PC-3 (cell line): ENCODE measurements at regions of chr18 and their contacts with region 1.

Region 1: DNA sequence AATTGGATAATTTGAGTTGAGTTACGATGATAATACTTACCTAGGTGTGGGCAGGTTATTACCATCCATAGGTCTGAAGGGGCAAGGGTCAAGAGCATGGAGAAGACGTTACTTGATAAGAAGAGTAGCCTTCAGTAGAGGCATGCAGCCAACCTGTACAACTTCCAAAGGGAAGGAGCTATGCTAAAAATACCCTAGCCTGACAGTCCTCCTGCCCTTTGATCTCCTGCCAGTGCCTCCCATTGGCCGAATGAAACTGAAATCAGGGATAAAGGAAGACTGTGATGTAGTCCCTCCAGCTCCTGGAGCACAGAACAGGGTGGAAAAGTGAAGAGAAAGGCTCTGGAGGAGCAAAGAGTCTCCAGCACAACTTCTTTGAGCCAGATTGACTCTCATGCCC is 487.4 kb downstream of the ADCYAP1 start:
- DNase-seq: no peak
- ATAC-seq: no peak
- H3K4me3 ChIP-seq: no peak overlapping the region
- H3K27ac ChIP-seq: peak overlapping the region; percentile 97
- H3K4me1 ChIP-seq: peaks cover 58% of the 10 kb centered on the region
- H3K27me3 ChIP-seq: no peaks in the 10 kb centered on the region
- CTCF ChIP-seq: no peak

Region 2: DNA sequence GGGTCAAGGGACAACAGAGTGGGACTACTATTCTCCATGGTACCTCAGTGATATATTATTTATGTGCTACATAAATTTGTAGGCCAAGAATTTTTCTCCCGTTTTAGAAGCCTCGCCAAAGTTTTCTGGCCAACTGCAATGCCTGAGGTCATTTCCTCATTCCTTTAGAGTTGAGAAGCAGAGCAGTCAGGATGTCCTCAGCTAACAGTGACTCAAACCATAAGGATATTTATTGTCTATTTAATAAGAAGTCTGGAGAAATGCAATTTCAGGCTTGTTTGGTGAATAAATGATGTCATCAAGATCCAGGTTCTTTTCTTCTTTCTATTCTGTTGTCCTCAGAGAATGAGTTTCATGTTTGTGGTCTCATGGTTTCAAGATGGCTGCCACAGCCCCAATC is 396.4 kb before region 1 on chr18:
- CTCF ChIA-PET with region 1: no interaction called
- POLR2A ChIA-PET with region 1: no interaction called
- intact Hi-C with region 1: loop called (anchors 2 kb)
- DNase-seq: peak; percentile 79
- ATAC-seq: peak; percentile 97
- H3K4me3 ChIP-seq: no peak overlapping the region
- H3K27ac ChIP-seq: peak overlapping the region; percentile 87
- H3K4me1 ChIP-seq: peaks cover 12% of the 10 kb centered on the region
- H3K27me3 ChIP-seq: no peaks in the 10 kb centered on the region
- CTCF ChIP-seq: no peak

Region 3: GRCh38 chr18:1270080-1270479 is 122.0 kb before region 1 on chr18:
- CTCF ChIA-PET with region 1: no interaction called
- POLR2A ChIA-PET with region 1: no interaction called
- intact Hi-C with region 1: loop called (anchors 1 kb)
- DNase-seq: peak; percentile 96
- ATAC-seq: peak; percentile 99
- H3K4me3 ChIP-seq: no peak overlapping the region
- H3K27ac ChIP-seq: peak overlapping the region; percentile 90
- H3K4me1 ChIP-seq: peaks cover 22% of the 10 kb centered on the region
- H3K27me3 ChIP-seq: no peaks in the 10 kb centered on the region
- CTCF ChIP-seq: no peak

Region 4: GRCh38 chr18:1296237-1296636 is 95.8 kb before region 1 on chr18:
- CTCF ChIA-PET with region 1: interaction called, 6 read pairs
- POLR2A ChIA-PET with region 1: interaction called, 11 read pairs
- intact Hi-C with region 1: loop called (anchors 2 kb)
- DNase-seq: peak; percentile 25
- ATAC-seq: no peak; the same call in 1 of the 2 replicates
- H3K4me3 ChIP-seq: no peak overlapping the region
- H3K27ac ChIP-seq: no peak overlapping the region
- H3K4me1 ChIP-seq: peaks cover 6% of the 10 kb centered on the region
- H3K27me3 ChIP-seq: no peaks in the 10 kb centered on the region
- CTCF ChIP-seq: no peak

Region 5: DNA sequence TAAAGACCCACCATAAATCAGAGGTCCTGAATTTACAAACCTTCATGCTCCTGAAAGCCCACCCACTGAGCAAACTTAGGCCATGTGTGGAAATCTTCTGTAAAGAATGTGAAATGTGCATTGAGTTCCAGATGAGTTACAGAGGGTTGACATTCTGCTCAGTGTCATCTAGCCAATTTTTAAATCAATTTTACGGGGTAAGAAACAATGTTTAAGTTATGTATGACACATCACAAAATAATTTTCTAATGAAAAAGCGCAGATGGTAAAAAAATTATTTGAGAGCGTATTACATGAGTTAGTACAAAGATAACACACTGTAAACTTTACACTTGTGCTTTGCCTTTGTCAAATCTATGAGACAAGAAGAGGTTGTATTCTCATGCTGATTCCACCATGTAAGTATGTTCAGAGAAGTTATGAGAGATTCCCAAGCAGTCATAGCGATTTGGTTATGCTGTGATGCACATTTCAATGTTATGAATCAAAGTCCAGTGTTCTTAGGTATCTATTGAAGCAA is 41.1 kb before region 1 on chr18:
- CTCF ChIA-PET with region 1: no interaction called
- POLR2A ChIA-PET with region 1: no interaction called
- intact Hi-C with region 1: loop called (anchors 2 kb)
- DNase-seq: peak; percentile 68
- ATAC-seq: peak; percentile 88
- H3K4me3 ChIP-seq: no peak overlapping the region
- H3K27ac ChIP-seq: peak overlapping the region; percentile 21; the same call in 1 of the 2 replicates
- H3K4me1 ChIP-seq: peaks cover 13% of the 10 kb centered on the region
- H3K27me3 ChIP-seq: no peaks in the 10 kb centered on the region
- CTCF ChIP-seq: no peak

Region 6: DNA sequence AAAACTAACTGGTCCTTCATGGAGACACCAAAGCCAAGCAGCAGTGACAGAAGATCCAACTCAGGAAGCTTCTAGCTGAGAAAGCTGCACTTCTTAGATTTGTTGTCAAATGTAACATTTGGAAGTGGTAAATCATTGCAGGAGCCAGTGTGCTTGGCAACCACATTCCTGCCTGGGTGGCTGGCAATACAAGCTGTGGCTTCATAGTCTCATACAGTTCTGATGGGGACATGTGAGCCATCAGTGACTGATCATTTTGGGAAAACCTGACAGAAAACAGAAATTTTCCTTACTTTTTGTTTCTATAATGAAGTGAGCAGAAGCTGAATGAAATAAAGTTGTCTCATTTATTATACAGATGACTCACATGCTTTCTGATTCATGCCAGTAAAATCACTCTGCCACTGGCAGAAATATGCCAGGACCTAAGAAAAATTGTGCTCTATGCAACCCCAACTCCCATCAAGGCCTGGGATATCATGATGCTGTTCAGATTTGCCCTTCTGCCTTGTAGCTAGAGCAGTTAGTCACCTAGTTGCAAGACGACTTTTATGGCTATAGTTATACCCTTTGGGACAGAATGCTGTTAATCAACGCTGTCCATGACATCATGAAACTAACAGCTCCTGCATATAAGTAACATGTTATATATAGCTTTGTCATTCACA is 20.7 kb after region 1 on chr18:
- CTCF ChIA-PET with region 1: no interaction called
- POLR2A ChIA-PET with region 1: interaction called, 6 read pairs
- intact Hi-C with region 1: loop called (anchors 2 kb)
- DNase-seq: peak; percentile 76
- ATAC-seq: peak; percentile 96
- H3K4me3 ChIP-seq: no peak overlapping the region
- H3K27ac ChIP-seq: peak overlapping the region; percentile 71
- H3K4me1 ChIP-seq: peaks cover 22% of the 10 kb centered on the region
- H3K27me3 ChIP-seq: no peaks in the 10 kb centered on the region
- CTCF ChIP-seq: no peak